Ascending aorta (tissue), 2 donors: ENCODE measurements at regions of chr17 and their contacts with region 1.

Region 1: DNA sequence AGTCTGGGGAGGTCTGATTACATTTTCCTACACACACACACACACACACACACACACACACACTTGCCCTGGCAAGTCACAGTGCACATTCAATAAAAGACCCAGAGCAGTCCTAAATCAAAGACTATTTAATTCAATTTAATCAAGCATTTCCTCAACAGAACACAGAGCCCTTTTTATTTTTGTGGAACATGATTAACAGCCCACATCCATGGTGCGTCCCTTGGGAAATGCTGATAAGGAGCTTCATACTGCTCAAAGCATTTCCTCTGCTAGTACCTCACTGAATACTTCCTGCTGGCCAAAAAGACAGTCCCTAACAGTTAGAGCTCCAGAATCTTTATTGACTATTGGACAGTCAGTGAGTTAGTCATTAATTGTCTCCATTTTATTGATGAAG is 43.1 kb upstream of the MYH10 start:
- DNase-seq: peak in 1 of 2 donors; percentile 85
- H3K4me3 ChIP-seq: peak overlapping the region in 1 of 2 donors; percentile 38
- H3K27ac ChIP-seq: peak overlapping the region; percentile 93 to 95
- H3K4me1 ChIP-seq: peaks cover 9 to 55% of the 10 kb centered on the region in 2 donors
- H3K27me3 ChIP-seq: no peaks in the 10 kb centered on the region
- CTCF ChIP-seq: no peak

Region 2: DNA sequence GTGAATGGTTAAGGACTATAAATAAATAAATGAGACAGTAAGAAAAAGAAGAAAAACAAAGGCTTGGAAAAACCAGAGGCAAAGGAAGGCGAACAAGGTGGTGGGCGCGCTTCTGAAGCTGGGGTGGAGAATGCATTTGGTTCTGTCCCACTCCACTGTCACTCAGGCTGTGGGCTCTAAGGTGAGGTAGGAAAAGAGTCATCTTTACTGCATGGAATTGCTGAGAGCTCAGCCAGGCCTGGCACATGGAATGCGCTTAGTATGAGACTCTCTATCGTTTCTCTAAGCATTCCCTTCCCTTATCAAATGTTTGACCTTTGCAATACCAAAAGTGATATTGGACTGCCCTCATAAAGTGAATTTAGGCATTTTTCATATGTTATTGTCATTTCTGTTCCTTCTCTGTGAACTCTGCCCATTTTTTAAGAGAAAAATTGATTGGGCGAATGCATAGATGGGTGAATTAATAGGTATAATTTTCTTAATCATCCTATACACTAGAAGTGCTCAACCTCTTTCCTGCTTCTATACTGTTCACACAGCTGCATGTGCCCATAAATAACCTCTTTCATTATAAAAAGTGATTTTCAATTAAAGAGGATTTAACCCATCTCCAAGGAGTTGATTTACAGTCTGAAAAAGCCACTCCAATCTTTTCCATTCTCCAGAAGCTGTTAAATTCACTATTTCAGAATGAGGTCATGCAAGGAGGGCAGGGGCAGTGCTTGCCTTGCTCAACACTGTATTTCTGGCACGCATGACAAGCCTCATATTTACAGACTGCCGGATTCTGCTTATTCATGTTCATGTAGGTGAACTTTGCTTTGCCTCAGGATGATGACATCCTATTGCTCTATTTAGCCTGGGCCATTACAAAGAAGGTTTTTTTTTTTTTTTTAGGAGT is 130.8 kb before region 1 on chr17:
- intact Hi-C with region 1: loop called (anchors 5 kb)
- DNase-seq: peak; percentile 29 to 88
- H3K4me3 ChIP-seq: no peak overlapping the region
- H3K27ac ChIP-seq: peak overlapping the region; percentile 9 to 63
- H3K4me1 ChIP-seq: peaks cover 0 to 3% of the 10 kb centered on the region in 2 donors
- H3K27me3 ChIP-seq: no peaks in the 10 kb centered on the region
- CTCF ChIP-seq: no peak

Region 3: DNA sequence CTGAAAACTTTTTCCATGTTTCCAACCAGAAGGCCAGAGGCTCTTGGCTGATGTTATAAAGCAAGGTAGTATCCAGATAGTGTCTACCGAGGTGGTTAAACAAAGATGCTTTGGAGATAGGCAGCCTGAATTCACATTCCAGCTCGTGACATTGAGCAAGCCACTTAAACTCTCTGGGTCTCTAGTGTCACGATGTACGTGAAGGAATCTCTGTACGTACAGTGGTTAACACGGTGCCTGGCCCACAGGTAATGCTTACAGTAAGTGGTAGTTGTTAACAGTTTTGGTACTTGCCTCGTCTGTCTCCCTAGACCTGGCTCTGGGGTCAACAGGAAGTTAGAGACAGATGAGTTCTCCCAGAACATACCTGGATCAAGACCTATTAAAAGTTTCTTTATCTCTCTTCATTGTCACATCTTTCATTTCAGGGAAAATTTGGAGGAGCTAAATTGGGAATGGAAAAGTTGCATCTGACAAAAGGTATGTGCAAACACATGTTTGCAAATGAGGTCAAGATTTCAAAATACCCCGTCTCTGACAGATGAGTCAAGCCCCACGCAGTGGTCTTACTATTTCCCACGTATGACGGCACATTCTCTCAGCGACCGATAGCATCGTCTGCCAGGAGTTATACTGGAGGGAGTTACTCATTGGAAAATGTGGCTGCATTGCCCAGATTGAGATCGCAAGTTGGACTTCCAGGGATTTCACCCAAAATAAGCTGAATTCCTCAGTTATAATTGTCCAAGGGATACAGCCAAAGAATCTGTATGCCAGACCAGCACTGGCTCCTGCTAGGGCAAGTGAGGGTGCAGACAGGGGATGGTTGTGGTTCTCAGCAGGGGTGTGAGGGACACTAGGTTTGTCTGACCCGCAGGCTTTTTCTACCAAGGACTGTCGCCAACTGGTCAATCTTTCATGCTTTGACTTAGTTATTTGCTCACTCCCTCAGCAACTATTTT is 24.2 kb before region 1 on chr17:
- intact Hi-C with region 1: loop called (anchors 2 kb)
- DNase-seq: peak; percentile 76 to 96
- H3K4me3 ChIP-seq: no peak overlapping the region
- H3K27ac ChIP-seq: peak overlapping the region; percentile 89 to 98
- H3K4me1 ChIP-seq: peaks cover 6 to 32% of the 10 kb centered on the region in 2 donors
- H3K27me3 ChIP-seq: no peaks in the 10 kb centered on the region
- CTCF ChIP-seq: no peak

Region 4: GRCh38 chr17:8687737-8688466 is 14.3 kb after region 1 on chr17:
- intact Hi-C with region 1: no loop called
- DNase-seq: peak in 1 of 2 donors; percentile 50
- H3K4me3 ChIP-seq: no peak overlapping the region
- H3K27ac ChIP-seq: peak overlapping the region; percentile 79 to 83
- H3K4me1 ChIP-seq: peaks cover 5 to 13% of the 10 kb centered on the region in 2 donors
- H3K27me3 ChIP-seq: no peaks in the 10 kb centered on the region
- CTCF ChIP-seq: no peak

Region 5: GRCh38 chr17:8698162-8699061 is 24.8 kb after region 1 on chr17:
- intact Hi-C with region 1: loop called (anchors 2 kb)
- DNase-seq: peak in 1 of 2 donors; percentile 84
- H3K4me3 ChIP-seq: peak overlapping the region; percentile 19 to 41
- H3K27ac ChIP-seq: peak overlapping the region; percentile 95
- H3K4me1 ChIP-seq: peaks cover 22 to 40% of the 10 kb centered on the region in 2 donors
- H3K27me3 ChIP-seq: no peaks in the 10 kb centered on the region
- CTCF ChIP-seq: no peak

Region 6: DNA sequence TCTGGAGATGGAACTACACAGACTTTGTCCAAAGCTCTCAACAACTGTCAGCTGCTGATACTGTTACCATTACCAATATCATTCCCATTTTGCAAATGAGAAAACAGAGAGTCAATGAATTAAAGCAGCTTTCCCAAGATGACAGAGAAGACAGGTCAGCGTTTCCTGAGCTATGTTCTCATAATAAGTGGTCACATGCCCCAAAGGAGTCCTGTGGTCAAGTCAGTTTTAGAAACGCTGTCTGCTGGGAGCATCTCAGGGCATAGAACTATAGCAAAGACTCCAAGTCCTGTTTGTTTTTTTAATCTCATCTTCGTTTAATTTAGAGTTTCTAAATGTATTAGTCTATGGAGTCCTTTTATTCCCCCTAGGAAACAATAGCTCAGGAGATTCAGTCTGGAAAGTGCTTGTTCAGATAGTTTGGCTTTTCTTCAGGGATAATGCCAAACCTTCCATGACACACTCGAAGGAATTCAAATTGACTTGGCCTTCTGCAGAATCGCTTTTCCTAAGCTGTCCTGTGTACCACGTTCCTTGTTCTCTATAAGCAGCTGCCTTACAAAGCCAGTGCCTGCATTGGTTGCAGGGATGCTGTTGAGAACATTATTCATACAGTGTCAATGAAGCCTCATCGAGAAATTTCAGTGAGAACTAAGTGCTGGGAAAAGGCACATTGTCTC is 58.9 kb after region 1 on chr17:
- intact Hi-C with region 1: no loop called
- DNase-seq: no peak
- H3K4me3 ChIP-seq: no peak overlapping the region
- H3K27ac ChIP-seq: peak overlapping the region; percentile 54 to 72
- H3K4me1 ChIP-seq: peaks cover 0 to 11% of the 10 kb centered on the region in 2 donors
- H3K27me3 ChIP-seq: no peaks in the 10 kb centered on the region
- CTCF ChIP-seq: no peak

Region 7: GRCh38 chr17:9120471-9120870 is 446.9 kb after region 1 on chr17:
- intact Hi-C with region 1: no loop called
- DNase-seq: no peak
- H3K4me3 ChIP-seq: no peak overlapping the region
- H3K27ac ChIP-seq: peak overlapping the region; percentile 35 to 69
- H3K4me1 ChIP-seq: peaks cover 0 to 22% of the 10 kb centered on the region in 2 donors
- H3K27me3 ChIP-seq: no peaks in the 10 kb centered on the region
- CTCF ChIP-seq: peak; percentile 19 to 51 (median 46)